IMR-90 (cell line): ENCODE measurements at regions of chr2 and their contacts with region 1.

Region 1: DNA sequence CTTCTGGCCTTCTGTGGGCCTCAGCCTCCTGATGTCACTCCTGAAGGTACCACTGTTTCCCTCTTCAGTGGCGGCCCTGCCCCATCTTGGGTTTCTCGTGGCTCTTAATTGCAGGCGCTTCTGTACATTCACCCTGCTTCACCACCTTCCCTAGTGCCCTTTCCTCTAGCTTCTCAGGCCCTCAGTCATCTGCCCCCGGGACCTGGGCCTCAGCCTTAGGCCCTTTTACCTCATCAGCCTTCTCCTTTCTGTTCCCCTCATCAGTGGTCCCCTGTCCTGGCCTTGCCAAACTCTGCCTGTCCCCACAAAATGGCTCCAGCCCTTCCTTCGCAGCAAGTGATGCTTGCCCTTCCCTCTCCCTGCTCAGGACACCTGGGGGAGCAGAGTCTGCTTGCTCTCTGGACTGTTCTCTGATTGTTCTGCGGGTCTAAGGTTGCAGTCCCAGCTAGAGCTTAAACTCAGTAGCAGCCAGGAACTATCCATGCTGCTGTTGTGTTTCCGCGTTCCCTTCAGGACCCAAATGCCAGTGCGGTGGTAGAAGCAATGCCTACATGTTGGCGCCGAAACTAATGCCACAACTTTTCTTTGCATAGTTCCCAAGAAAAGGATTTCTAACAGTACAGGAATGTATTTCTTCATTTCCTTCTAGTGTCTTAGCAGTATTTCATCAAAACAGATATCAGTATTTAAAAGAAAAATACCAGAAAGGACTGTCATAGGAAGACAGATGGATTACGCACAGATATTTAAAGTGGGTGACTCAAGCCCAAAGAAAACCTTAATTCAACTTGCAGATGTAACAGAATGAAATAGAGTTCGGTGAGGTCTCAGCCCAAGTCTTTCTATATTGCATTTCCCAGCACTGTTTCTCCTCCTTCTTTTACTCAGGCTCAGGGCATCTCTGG is 7.5 kb downstream of the ASB1 start:
- DNase-seq: peak; percentile 96
- ATAC-seq: peak; percentile 79
- H3K4me3 ChIP-seq: no peak overlapping the region
- H3K27ac ChIP-seq: peak overlapping the region; percentile 92
- H3K4me1 ChIP-seq: peaks cover 26% of the 10 kb centered on the region
- H3K27me3 ChIP-seq: no peaks in the 10 kb centered on the region
- CTCF ChIP-seq: no peak
- POLR2A ChIP-seq: peak; percentile 53
- RAD21 ChIP-seq: no peak

Region 2: DNA sequence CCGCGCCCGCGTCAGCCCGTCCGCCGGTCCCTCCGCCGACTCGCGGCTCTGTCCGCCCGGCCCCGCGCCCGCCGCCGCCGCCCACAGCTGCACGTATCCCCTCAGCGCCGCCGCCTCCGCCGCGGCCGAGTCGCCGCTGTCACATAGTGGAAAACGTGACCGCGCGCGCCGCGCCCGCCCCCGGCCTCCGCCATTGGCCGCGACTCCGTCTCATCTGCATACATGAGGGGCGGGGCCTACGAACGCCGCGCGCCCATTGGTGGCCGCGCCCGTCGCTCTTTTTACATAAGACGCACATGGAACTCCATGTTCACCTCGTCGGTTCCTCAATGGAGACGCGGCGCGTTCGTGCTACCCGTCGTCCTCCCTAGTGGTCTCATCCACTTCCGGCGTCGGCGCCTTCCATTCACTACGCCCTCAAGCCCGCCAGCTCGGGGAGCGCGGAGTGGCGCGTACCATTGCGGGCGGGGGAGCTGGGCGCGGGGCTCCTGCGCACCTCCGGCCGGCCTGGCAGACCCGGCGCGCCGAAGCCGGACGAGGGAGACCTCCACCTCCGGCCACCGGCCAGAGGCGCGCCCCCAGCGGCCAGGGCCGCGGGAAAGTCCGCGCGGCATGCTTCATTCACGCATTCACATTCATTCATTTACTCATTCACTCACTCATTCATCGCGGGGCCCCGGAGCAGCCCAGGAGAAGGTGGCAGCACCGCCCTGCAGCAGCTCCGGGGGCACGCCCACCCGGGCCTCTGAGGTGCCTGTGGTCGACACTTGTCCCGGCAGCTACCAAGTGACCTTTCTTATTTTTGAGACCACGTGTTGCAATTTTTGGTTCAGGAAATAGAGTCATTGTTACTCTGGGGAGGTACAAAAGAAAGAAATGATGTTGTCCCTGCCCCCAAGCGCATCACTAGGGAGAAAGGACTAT is 145.3 kb before region 1 on chr2:
- CTCF ChIA-PET with region 1: no interaction called
- POLR2A ChIA-PET with region 1: no interaction called
- dilution Hi-C with region 1: no loop called
- in situ Hi-C with region 1: no loop called
- intact Hi-C with region 1: loop called (anchors 5 kb)
- DNase-seq: peak; percentile 99
- ATAC-seq: peak; percentile 90
- H3K4me3 ChIP-seq: peak overlapping the region; percentile 69
- H3K27ac ChIP-seq: peak overlapping the region; percentile 33; the same call in 1 of the 2 replicates
- H3K4me1 ChIP-seq: peaks cover 23% of the 10 kb centered on the region
- H3K27me3 ChIP-seq: peaks cover 3% of the 10 kb centered on the region; the same call in 1 of the 2 replicates
- CTCF ChIP-seq: peak; percentile 46
- POLR2A ChIP-seq: peak; percentile 76
- RAD21 ChIP-seq: no peak

Region 3: GRCh38 chr2:238379096-238379810 is 54.9 kb before region 1 on chr2:
- CTCF ChIA-PET with region 1: no interaction called
- POLR2A ChIA-PET with region 1: no interaction called
- dilution Hi-C with region 1: no loop called
- in situ Hi-C with region 1: no loop called
- intact Hi-C with region 1: loop called (anchors 5 kb)
- DNase-seq: peak; percentile 77
- ATAC-seq: peak; percentile 72
- H3K4me3 ChIP-seq: no peak overlapping the region
- H3K27ac ChIP-seq: peak overlapping the region; percentile 72
- H3K4me1 ChIP-seq: peaks cover 18% of the 10 kb centered on the region
- H3K27me3 ChIP-seq: no peaks in the 10 kb centered on the region
- CTCF ChIP-seq: no peak
- POLR2A ChIP-seq: no peak
- RAD21 ChIP-seq: no peak

Region 4: DNA sequence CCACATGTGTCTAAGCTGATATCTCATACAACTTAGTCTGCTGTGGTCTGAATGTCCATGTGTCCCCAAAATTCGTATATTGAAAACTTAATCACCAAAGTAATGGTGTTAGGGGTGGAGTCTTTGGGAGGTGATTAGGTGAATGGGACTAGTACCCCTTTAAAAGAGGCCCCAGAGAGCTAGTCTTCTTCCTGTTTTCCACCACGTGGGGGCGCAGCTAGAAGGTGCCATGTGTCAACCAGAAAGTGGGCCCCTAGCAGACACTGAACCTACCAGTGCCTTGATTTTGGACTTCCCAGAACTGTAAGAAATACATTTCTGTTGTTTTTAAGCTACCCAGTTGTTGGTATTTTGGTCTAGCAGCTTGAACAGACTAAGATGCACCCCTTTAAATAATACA is 79.2 kb after region 1 on chr2:
- CTCF ChIA-PET with region 1: no interaction called
- POLR2A ChIA-PET with region 1: no interaction called
- dilution Hi-C with region 1: no loop called
- in situ Hi-C with region 1: no loop called
- intact Hi-C with region 1: no loop called
- DNase-seq: peak; percentile 29
- ATAC-seq: peak; percentile 56
- H3K4me3 ChIP-seq: no peak overlapping the region
- H3K27ac ChIP-seq: no peak overlapping the region
- H3K4me1 ChIP-seq: no peaks in the 10 kb centered on the region; the same call in 1 of the 2 replicates
- H3K27me3 ChIP-seq: no peaks in the 10 kb centered on the region; the same call in 1 of the 2 replicates
- CTCF ChIP-seq: peak; percentile 50
- POLR2A ChIP-seq: no peak
- RAD21 ChIP-seq: peak; percentile 47; the same call in 1 of the 2 replicates

Region 5: GRCh38 chr2:240069853-240070252 is 1635.7 kb after region 1 on chr2:
- CTCF ChIA-PET with region 1: no interaction called
- POLR2A ChIA-PET with region 1: no interaction called
- dilution Hi-C with region 1: no loop called
- in situ Hi-C with region 1: no loop called
- intact Hi-C with region 1: no loop called
- DNase-seq: no peak
- ATAC-seq: no peak
- H3K4me3 ChIP-seq: no peak overlapping the region
- H3K27ac ChIP-seq: no peak overlapping the region
- H3K4me1 ChIP-seq: no peaks in the 10 kb centered on the region
- H3K27me3 ChIP-seq: no peaks in the 10 kb centered on the region; the same call in 1 of the 2 replicates
- CTCF ChIP-seq: no peak
- POLR2A ChIP-seq: no peak
- RAD21 ChIP-seq: no peak